ENCODE measurements at regions of chr19 and their contacts with region 1.

Region 1: GRCh38 chr19:49949744-49950589 is 11.0 kb downstream of the SIGLEC11 start:
- DNase-seq: no peak
- H3K27ac ChIP-seq: no peak overlapping the region
- CTCF ChIP-seq: no peak

Region 2: GRCh38 chr19:49937750-49938381 is 12.1 kb before region 1 on chr19:
- CTCF ChIA-PET with region 1: interaction called, 10 read pairs
- POLR2A ChIA-PET with region 1: no interaction called
- DNase-seq: peak; percentile 68
- H3K27ac ChIP-seq: no peak overlapping the region
- CTCF ChIP-seq: peak; percentile 94

Region 3: GRCh38 chr19:50025024-50025789 is 75.2 kb after region 1 on chr19 and contains the start of gene VRK3:
- CTCF ChIA-PET with region 1: no interaction called
- POLR2A ChIA-PET with region 1: no interaction called
- DNase-seq: peak; percentile 99
- H3K27ac ChIP-seq: peak within 1 kb of the TSS; percentile 84
- CTCF ChIP-seq: no peak

Measured in RWPE1 (cell line).